CD8-positive, alpha-beta T cell (primary cell): ENCODE measurements at regions of chr9 and their contacts with region 1.

Region 1: GRCh38 chr9:105414947-105415661 is 32.7 kb upstream of the FSD1L start:
- DNase-seq: peak; percentile 28 to 82 (median 64)
- ATAC-seq: peak; percentile 85
- H3K4me3 ChIP-seq: no peak overlapping the region
- H3K4me3 Mint-ChIP-seq: no peak overlapping the region
- H3K27ac ChIP-seq: no peak overlapping the region
- H3K27ac Mint-ChIP-seq: no peak overlapping the region
- H3K4me1 ChIP-seq: peaks cover 2% of the 10 kb centered on the region
- H3K4me1 Mint-ChIP-seq: peaks cover 6% of the 10 kb centered on the region
- H3K27me3 ChIP-seq: peaks cover 4 to 6% of the 10 kb centered on the region in 2 experiments
- H3K27me3 Mint-ChIP-seq: peaks cover 33% of the 10 kb centered on the region
- CTCF ChIP-seq: peak; percentile 87

Region 2: DNA sequence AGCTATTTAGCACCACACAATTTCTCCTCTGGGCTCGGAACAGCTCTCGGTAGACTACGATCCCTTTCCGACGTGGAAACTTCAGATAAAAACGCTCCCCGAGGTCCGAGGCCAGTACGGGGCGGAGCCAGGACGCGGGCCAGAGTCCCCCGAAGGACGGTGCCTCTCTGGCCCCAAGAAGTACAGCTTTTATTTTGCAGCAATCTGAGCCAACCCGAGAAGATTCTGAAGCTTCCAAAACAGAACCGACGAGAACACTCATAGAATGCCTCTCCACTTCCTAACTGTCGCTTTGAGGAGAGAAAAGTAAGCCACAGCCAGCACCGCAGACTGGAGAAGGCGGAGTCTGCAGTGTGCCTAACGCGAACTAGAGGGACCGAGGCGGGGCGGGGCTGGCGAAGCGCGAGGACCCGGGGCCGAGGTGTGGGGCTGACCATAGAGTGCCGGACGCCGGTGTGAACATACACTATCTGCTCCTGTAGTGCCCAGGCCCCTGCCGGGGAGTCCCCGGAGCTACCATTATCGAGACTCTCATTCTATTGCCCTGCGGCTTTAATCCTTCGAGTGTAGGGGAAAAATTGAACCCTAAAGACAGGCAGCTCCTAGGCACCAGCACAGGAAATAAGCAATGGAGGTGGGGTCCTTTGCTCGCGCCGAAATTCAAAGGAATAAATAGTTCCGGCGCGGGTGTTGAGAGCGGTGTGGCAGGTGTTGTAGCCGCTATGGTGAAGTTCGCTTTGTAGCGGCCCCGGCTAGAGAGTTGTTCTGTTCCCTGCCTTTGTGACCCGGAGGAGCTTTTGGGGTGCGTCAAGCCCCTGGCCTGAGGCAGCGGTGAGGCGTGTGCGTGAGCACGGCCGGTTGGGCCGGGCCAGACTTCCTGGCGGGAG is 1321.2 kb before region 1 on chr9 and contains the start of gene SMC2:
- CTCF ChIA-PET with region 1: no interaction called
- POLR2A ChIA-PET with region 1: no interaction called
- intact Hi-C with region 1: loop called in 1 of 2 experiments (anchors 10 kb)
- DNase-seq: peak; percentile 90 to 96 (median 94)
- ATAC-seq: peak; percentile 96
- H3K4me3 ChIP-seq: peak within 1 kb of the TSS; percentile 58 to 79
- H3K4me3 Mint-ChIP-seq: peak within 1 kb of the TSS; percentile 98
- H3K27ac ChIP-seq: peak within 1 kb of the TSS; percentile 78 to 98
- H3K27ac Mint-ChIP-seq: peak within 1 kb of the TSS; percentile 98
- H3K4me1 ChIP-seq: peaks cover 21% of the 10 kb centered on the region
- H3K4me1 Mint-ChIP-seq: peaks cover 44% of the 10 kb centered on the region
- H3K27me3 ChIP-seq: no peaks in the 10 kb centered on the region
- H3K27me3 Mint-ChIP-seq: no peaks in the 10 kb centered on the region
- CTCF ChIP-seq: no peak
- total RNA-seq, gene SMC2: 1.9 to 2.0 TPM

Region 3: DNA sequence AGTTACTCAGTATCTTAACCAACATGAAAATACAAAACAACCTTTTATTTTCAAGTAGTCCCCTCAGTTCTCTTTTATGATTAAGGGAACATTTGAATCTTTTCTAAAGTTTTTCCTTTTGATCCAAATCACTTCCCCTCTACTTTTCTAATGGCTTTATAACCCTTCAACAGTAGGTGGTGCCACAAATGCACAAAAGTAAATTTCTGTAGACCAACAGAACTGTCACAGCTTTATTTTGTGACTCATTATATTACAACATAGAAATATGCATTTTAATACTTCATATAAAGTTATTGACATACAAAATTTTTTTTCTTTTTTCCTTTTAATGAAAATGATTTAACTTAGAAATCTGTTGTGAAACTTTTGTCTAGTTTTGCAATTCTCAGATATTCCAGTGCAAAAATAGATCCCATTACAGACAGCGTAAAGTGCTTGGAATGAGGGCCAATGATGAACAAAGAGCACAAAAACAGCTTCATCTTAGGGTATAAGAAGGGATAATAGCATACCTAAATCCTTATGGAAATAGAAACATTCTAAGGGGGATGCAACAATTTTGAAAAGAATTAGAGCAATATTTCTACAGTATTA is 634.2 kb before region 1 on chr9:
- CTCF ChIA-PET with region 1: interaction called, 4 read pairs
- POLR2A ChIA-PET with region 1: no interaction called
- intact Hi-C with region 1: loop called (anchors 1 to 5 kb)
- DNase-seq: peak in 2 of 9 experiments; percentile 13 to 31
- ATAC-seq: no peak
- H3K4me3 ChIP-seq: no peak overlapping the region
- H3K4me3 Mint-ChIP-seq: no peak overlapping the region
- H3K27ac ChIP-seq: no peak overlapping the region
- H3K27ac Mint-ChIP-seq: no peak overlapping the region
- H3K4me1 ChIP-seq: no peaks in the 10 kb centered on the region
- H3K4me1 Mint-ChIP-seq: no peaks in the 10 kb centered on the region
- H3K27me3 ChIP-seq: no peaks in the 10 kb centered on the region
- H3K27me3 Mint-ChIP-seq: no peaks in the 10 kb centered on the region
- CTCF ChIP-seq: no peak

Region 4: DNA sequence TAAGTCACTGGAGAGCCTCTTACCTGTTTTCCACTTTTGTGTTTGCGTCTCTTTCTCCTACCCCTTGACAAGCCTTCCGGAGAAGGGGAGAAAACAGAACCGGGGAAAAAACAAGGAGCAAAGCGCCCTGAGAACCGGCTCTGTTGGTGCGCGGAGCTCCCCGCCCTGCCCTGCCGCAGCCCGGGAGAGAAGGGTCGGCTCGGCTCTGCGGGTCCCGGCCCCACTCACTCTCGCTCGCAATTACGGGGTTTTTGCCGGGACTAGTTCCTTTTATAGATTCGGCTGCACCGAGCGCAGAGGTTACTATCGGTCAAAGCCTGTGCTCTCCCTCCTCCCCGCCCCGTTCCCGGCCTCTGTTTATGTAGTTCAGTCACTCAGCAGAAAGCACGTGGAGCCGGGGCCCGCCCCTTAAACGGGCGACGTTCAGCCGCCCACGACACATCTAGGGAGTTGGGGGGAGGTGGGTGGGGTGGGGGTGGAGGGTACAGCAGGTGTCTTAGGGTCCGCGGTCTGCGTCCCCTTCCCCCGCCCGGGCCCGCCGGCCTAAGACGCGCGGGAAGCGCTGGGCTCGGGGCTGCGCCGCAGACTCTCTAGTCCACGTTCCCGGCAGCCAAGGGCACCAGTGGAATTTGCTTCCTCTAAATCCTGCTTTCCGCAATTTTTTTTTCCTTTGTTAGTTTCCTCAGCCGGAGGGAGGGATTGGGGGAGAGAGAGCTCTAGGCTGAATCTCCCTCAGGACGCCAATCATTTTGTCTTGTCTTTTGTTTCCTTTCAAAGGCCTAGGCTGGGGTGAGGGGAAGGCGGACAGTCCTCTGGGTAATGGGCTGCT is 487.0 kb before region 1 on chr9 and contains the start of gene ABCA1:
- CTCF ChIA-PET with region 1: interaction called, 4 read pairs
- POLR2A ChIA-PET with region 1: no interaction called
- intact Hi-C with region 1: loop called (anchors 1 to 2 kb)
- DNase-seq: peak; percentile 42 to 87 (median 65)
- ATAC-seq: peak; percentile 78
- H3K4me3 ChIP-seq: peak within 1 kb of the TSS; percentile 56 to 71
- H3K4me3 Mint-ChIP-seq: peak within 1 kb of the TSS; percentile 91
- H3K27ac ChIP-seq: no peak within 1 kb of the TSS
- H3K27ac Mint-ChIP-seq: peak within 1 kb of the TSS; percentile 80
- H3K4me1 ChIP-seq: peaks cover 19% of the 10 kb centered on the region
- H3K4me1 Mint-ChIP-seq: peaks cover 15% of the 10 kb centered on the region
- H3K27me3 ChIP-seq: peaks cover 0 to 24% of the 10 kb centered on the region in 2 experiments
- H3K27me3 Mint-ChIP-seq: peaks cover 11% of the 10 kb centered on the region
- CTCF ChIP-seq: no peak
- total RNA-seq, gene ABCA1: 11.2 to 11.4 TPM

Region 5: GRCh38 chr9:105390871-105391270 is 24.2 kb before region 1 on chr9:
- CTCF ChIA-PET with region 1: no interaction called
- POLR2A ChIA-PET with region 1: no interaction called
- intact Hi-C with region 1: no loop called
- DNase-seq: no peak
- ATAC-seq: no peak
- H3K4me3 ChIP-seq: no peak overlapping the region
- H3K4me3 Mint-ChIP-seq: no peak overlapping the region
- H3K27ac ChIP-seq: no peak overlapping the region
- H3K27ac Mint-ChIP-seq: no peak overlapping the region
- H3K4me1 ChIP-seq: peaks cover 2% of the 10 kb centered on the region
- H3K4me1 Mint-ChIP-seq: peaks cover under 1% of the 10 kb centered on the region
- H3K27me3 ChIP-seq: no peaks in the 10 kb centered on the region
- H3K27me3 Mint-ChIP-seq: peaks cover 9% of the 10 kb centered on the region
- CTCF ChIP-seq: no peak

Region 6: DNA sequence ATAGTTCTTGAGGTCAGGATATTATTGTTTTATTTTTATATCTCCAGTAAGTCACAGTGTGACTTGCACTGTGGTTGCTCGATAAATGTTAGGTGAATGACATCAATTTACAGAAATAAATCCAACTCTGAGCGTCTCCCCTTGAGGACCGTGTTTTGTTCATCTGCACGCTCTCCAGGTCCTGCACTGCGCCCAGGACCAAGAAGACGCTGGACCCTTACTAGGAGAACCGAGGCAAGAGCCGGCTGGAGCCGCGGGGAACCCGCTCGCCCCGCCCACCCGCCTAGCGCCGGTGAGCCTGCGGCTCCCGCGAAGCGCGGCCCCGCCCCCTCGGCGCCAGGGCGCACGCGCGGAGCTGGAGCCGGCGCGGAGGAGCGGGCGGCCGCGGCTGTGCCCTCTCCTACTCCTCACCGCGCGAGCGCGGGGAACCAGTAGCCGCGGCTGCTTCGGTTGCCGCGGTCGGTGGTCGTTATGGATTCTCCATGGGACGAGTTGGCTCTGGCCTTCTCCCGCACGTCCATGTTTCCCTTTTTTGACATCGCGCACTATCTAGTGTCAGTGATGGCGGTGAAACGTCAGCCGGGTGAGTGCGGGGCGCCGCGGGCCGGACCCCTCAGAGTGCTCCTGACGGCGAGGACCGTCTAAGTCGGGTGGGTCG is 279.2 kb after region 1 on chr9 and contains the start of gene TMEM38B:
- CTCF ChIA-PET with region 1: no interaction called
- POLR2A ChIA-PET with region 1: no interaction called
- intact Hi-C with region 1: loop called in 1 of 2 experiments (anchors 10 kb)
- DNase-seq: peak; percentile 54 to 91 (median 73)
- ATAC-seq: peak; percentile 90
- H3K4me3 ChIP-seq: peak within 1 kb of the TSS; percentile 69 to 78
- H3K4me3 Mint-ChIP-seq: peak within 1 kb of the TSS; percentile 90
- H3K27ac ChIP-seq: peak within 1 kb of the TSS; percentile 20 to 58
- H3K27ac Mint-ChIP-seq: peak within 1 kb of the TSS; percentile 73
- H3K4me1 ChIP-seq: peaks cover 15% of the 10 kb centered on the region
- H3K4me1 Mint-ChIP-seq: peaks cover 32% of the 10 kb centered on the region
- H3K27me3 ChIP-seq: peaks cover 0 to 13% of the 10 kb centered on the region in 2 experiments
- H3K27me3 Mint-ChIP-seq: peaks cover 32% of the 10 kb centered on the region
- CTCF ChIP-seq: no peak
- total RNA-seq, gene TMEM38B: 9.5 to 14.1 TPM